ENCODE measurements at regions of chr17 and their contacts with region 1.

Region 1: GRCh38 chr17:78289802-78290363 is 58.5 kb downstream of the TMEM235 start:
- DNase-seq: peak; percentile 78
- ATAC-seq: peak; percentile 95
- H3K4me3 Mint-ChIP-seq: no peak overlapping the region
- H3K27ac Mint-ChIP-seq: no peak overlapping the region
- H3K4me1 Mint-ChIP-seq: peaks cover 1% of the 10 kb centered on the region
- H3K27me3 Mint-ChIP-seq: no peaks in the 10 kb centered on the region; the same call in 1 of the 2 replicates
- CTCF ChIP-seq: peak; percentile 63

Region 2: DNA sequence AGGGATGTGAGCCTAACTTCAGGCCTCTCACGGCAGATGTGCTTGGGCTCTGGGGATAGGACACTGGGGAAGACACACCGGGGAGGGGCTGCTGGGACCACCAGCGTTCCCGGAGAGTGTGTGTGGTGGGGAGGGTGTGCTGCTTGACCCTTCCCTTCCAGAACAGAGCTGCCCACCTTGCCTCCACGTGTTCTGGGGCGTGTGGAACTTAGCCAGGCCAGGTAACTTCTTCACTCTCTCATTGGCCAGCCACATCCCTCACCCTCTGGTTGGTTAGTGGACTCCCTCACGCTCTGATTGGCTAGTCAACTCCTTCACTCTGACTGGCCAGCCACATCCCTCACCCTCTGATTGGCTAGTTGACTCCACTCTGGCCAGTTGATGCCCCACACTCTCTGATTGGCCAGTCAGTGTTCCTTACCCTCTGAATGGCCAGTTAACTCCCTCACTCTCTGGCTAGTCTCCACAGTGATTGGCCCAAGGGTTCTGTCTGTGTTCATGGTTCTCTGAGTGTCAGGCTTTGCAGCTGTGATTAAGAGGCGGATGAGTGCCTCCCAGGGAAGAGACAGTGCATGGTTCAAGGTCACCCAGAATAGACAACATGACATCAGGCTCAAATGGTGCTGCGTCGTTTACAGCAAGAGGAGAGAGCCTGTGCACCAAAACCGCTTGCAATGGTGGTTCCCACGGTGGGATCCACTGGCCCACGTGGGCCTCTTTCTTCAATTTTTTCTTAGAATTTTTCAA is 48.4 kb before region 1 on chr17:
- CTCF ChIA-PET with region 1: no interaction called
- POLR2A ChIA-PET with region 1: no interaction called
- DNase-seq: no peak
- ATAC-seq: peak; percentile 88
- H3K4me3 Mint-ChIP-seq: no peak overlapping the region
- H3K27ac Mint-ChIP-seq: peak overlapping the region; percentile 77; the same call in 1 of the 2 replicates
- H3K4me1 Mint-ChIP-seq: peaks cover 4% of the 10 kb centered on the region; the same call in 1 of the 2 replicates
- H3K27me3 Mint-ChIP-seq: no peaks in the 10 kb centered on the region
- CTCF ChIP-seq: no peak

Region 3: GRCh38 chr17:78278139-78279127 is 11.4 kb before region 1 on chr17:
- CTCF ChIA-PET with region 1: interaction called, 10 read pairs
- POLR2A ChIA-PET with region 1: interaction called, 4 read pairs
- DNase-seq: peak; percentile 48
- ATAC-seq: peak; percentile 80
- H3K4me3 Mint-ChIP-seq: no peak overlapping the region
- H3K27ac Mint-ChIP-seq: no peak overlapping the region; the same call in 1 of the 2 replicates
- H3K4me1 Mint-ChIP-seq: peaks cover 23% of the 10 kb centered on the region
- H3K27me3 Mint-ChIP-seq: no peaks in the 10 kb centered on the region
- CTCF ChIP-seq: no peak